CD8-positive, alpha-beta T cell (primary cell): ENCODE measurements at regions of chr2 and their contacts with region 1.

Region 1: GRCh38 chr2:86185517-86186212 is 9.6 kb downstream of the IMMT start:
- DNase-seq: peak in 2 of 9 experiments; percentile 50 to 74
- ATAC-seq: peak; percentile 69
- H3K4me3 ChIP-seq: no peak overlapping the region
- H3K4me3 Mint-ChIP-seq: peak overlapping the region; percentile 58
- H3K27ac ChIP-seq: peak overlapping the region; percentile 29 to 82
- H3K27ac Mint-ChIP-seq: peak overlapping the region; percentile 91
- H3K4me1 ChIP-seq: peaks cover 44% of the 10 kb centered on the region
- H3K4me1 Mint-ChIP-seq: peaks cover 68% of the 10 kb centered on the region
- H3K27me3 ChIP-seq: no peaks in the 10 kb centered on the region
- H3K27me3 Mint-ChIP-seq: no peaks in the 10 kb centered on the region
- CTCF ChIP-seq: no peak

Region 2: GRCh38 chr2:85978883-85979780 is 206.5 kb before region 1 on chr2:
- CTCF ChIA-PET with region 1: no interaction called
- POLR2A ChIA-PET with region 1: no interaction called
- intact Hi-C with region 1: no loop called
- DNase-seq: peak in 1 of 9 experiments; percentile 15
- ATAC-seq: no peak
- H3K4me3 ChIP-seq: no peak overlapping the region
- H3K4me3 Mint-ChIP-seq: no peak overlapping the region
- H3K27ac ChIP-seq: no peak overlapping the region
- H3K27ac Mint-ChIP-seq: no peak overlapping the region
- H3K4me1 ChIP-seq: no peaks in the 10 kb centered on the region
- H3K4me1 Mint-ChIP-seq: no peaks in the 10 kb centered on the region
- H3K27me3 ChIP-seq: no peaks in the 10 kb centered on the region
- H3K27me3 Mint-ChIP-seq: no peaks in the 10 kb centered on the region
- CTCF ChIP-seq: no peak

Region 3: GRCh38 chr2:86140969-86141392 is 44.7 kb before region 1 on chr2:
- CTCF ChIA-PET with region 1: no interaction called
- POLR2A ChIA-PET with region 1: no interaction called
- intact Hi-C with region 1: loop called in 1 of 2 experiments (anchors 5 kb)
- DNase-seq: no peak
- ATAC-seq: no peak
- H3K4me3 ChIP-seq: no peak overlapping the region
- H3K4me3 Mint-ChIP-seq: no peak overlapping the region
- H3K27ac ChIP-seq: no peak overlapping the region
- H3K27ac Mint-ChIP-seq: peak overlapping the region; percentile 72
- H3K4me1 ChIP-seq: no peaks in the 10 kb centered on the region
- H3K4me1 Mint-ChIP-seq: peaks cover 19% of the 10 kb centered on the region
- H3K27me3 ChIP-seq: no peaks in the 10 kb centered on the region
- H3K27me3 Mint-ChIP-seq: no peaks in the 10 kb centered on the region
- CTCF ChIP-seq: no peak

Region 4: DNA sequence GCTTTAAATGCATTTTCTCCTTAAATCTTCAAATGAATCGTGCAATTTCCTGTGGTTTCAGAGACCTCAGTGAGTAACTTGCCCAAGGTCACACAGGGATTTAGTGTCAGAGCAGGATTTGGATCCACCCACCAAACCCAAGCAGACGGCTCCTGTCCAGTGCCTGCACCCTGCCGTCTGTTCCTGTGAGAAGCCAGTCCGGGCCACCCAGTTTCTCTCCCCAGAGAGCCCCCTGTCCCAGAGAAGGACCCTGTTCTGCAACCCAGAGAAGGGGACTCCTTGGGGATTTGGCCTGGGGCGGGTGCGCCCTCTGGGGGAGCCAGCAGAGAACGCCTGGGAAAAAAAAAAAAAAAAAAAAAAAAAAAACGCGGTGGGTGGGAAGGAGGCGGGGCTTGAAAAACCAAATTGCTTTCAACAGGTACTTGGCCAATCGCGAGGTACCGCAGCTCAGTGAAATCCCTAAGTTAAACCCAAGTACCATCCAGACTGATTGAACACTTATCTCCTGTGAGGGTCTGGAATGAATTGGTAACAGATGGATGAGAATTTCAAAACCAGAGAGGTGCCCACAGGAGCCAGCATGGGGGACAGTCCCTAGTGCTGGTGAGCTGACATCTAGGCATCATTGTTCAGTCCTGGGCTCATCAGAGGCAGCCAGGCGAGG is 182.6 kb after region 1 on chr2:
- CTCF ChIA-PET with region 1: no interaction called
- POLR2A ChIA-PET with region 1: no interaction called
- intact Hi-C with region 1: loop called in 1 of 2 experiments (anchors 10 kb)
- DNase-seq: peak in 8 of 9 experiments; percentile 20 to 68 (median 34)
- ATAC-seq: peak; percentile 67
- H3K4me3 ChIP-seq: peak overlapping the region in 1 of 2 experiments; percentile 13
- H3K4me3 Mint-ChIP-seq: peak overlapping the region; percentile 67
- H3K27ac ChIP-seq: no peak overlapping the region
- H3K27ac Mint-ChIP-seq: peak overlapping the region; percentile 79
- H3K4me1 ChIP-seq: peaks cover 32% of the 10 kb centered on the region
- H3K4me1 Mint-ChIP-seq: peaks cover 44% of the 10 kb centered on the region
- H3K27me3 ChIP-seq: no peaks in the 10 kb centered on the region
- H3K27me3 Mint-ChIP-seq: no peaks in the 10 kb centered on the region
- CTCF ChIP-seq: peak; percentile 4